Left lung (tissue), 14 donors: ENCODE measurements at regions of chr21 and their contacts with region 1.

Region 1: GRCh38 chr21:37366482-37367316 is at the start of gene DYRK1A:
- DNase-seq: peak; percentile 98 to 100 (median 99)
- ATAC-seq: peak; percentile 92
- H3K4me3 ChIP-seq: peak within 1 kb of the TSS; percentile 79 to 87
- H3K27ac ChIP-seq: peak within 1 kb of the TSS; percentile 100
- H3K4me1 ChIP-seq: peaks cover 9 to 40% of the 10 kb centered on the region in 2 donors
- H3K27me3 ChIP-seq: no peaks in the 10 kb centered on the region
- CTCF ChIP-seq: no peak
- polyA plus RNA-seq, gene DYRK1A: 57.5 to 69.9 (median 66.8) TPM

Region 2: DNA sequence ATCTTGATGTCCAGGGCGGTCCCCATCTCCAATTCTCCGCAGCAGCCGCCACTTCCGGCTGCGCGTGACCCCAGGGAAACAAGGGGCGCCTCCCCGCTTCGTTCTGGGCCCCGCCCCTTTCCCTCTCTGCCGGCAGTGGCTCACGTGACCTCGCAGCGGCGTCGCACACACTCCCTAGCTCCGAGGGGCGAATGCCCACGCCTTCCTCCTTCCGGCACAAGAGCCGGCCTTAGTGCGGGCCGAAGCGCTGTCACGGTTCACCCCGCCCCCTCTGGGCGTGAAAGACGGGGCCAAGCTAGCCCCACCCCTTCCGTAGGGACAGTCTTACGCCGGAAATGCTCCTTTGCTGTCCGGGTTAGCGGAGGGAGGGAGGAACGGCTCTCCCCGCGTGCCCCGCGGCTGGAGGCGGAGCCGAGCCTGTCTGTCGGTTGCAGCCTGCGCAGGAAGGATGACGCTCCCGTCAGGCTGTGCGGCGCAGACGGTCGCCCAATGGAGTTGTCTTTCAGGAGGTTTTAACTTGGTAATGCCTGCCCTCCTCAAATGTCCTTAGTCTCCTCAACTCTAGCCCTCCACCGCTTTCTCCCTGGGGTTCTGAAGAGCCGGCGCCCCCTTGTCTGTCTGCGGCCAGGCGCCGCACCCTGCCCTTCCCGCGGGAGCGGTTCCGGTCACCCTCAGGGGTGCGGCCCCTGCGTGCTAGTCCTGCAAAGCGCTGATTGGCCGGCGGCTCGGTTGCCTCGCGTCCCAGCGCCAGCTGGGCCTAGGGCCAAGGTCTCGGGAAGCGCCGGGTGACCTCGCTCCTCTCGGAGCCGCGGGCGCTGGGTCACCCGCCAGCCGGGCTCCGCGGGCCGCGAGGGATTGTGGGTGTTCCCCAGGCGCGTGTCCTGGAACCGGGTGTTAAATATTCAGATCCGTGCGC is 99.2 kb before region 1 on chr21 and contains the start of gene VPS26C:
- intact Hi-C with region 1: loop called in 1 of 2 experiments (anchors 10 kb)
- DNase-seq: peak; percentile 98 to 100 (median 100)
- ATAC-seq: peak; percentile 95
- H3K4me3 ChIP-seq: peak within 1 kb of the TSS; percentile 94 to 98
- H3K27ac ChIP-seq: peak within 1 kb of the TSS; percentile 99
- H3K4me1 ChIP-seq: peaks cover 7 to 43% of the 10 kb centered on the region in 2 donors
- H3K27me3 ChIP-seq: no peaks in the 10 kb centered on the region
- CTCF ChIP-seq: peak in 1 of 2 donors; percentile 11
- polyA plus RNA-seq, gene VPS26C: 34.6 to 41.3 (median 37.8) TPM